Activated T-helper 1 cell treated with anti-CD3 and anti-CD28 coated beads, Interleukin-12 subunit alpha, Interleukin-12 subunit beta, Interleukin-2, Interleukin-4 antibody, amounts not matched to agents 30 ng/mL and 10 ng/mL and 1 ng/mL, durations not matched to agents 14 hours and 24 hours and 36 hours (primary cell): ENCODE measurements at regions of chr6 and their contacts with region 1.

Region 1: DNA sequence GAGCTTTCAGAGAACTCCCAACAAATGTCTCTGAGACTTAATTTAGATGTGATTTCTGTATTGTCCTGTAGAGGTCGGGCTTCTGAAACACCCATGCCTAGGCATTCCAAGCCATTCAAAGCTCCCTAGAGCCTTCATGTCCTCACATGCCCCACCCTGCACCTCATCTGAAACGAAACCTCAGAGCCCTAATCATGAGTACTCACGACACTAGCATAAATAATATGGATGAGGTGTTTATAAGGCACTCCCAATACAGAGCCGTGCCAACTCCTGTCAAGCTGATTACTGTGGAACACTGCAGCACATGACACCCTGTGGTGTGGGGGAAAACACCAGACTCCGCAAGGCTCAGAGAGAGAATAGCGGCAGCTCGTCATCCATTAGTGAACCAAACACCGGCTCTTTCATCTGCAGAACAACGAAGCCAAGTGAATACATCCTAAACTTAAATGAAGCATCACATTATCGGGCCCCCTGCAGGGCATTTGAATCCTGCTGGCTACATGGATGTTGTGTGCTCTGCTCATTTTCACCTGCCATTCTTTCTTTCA is 83.8 kb downstream of the FNDC1 start:
- DNase-seq: no peak
- H3K4me3 Mint-ChIP-seq: no peak overlapping the region
- H3K27ac Mint-ChIP-seq: no peak overlapping the region
- H3K4me1 Mint-ChIP-seq: no peaks in the 10 kb centered on the region
- H3K27me3 Mint-ChIP-seq: peaks cover 2% of the 10 kb centered on the region

Region 2: DNA sequence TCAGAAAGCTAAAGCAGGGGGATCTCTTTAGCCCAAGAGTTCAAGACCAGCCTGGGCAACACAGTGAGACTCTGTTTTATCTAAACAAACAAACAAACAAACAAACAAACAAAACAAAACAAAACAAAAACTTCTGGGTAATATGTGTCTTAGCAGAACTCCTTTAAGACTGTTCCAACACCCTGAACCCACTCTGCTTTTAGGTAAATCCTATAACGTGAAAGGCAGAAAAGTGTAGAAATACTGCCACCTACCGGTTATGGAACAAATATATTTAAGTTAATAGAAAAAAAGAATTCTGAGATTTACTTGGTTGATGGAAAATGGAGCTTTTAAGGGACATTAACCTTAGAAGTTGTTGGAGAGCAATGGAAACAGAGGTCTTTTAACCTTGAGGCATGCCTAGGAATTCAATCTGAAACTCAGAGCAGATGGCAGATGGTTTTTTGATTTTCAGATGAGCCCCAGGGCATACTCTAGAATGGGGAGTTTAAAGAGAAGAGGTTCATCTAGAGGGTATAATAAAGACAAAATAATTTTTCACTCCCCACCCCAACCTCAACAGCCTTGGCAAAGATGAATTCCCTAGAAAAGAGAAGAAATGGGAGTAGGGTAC is 401.6 kb after region 1 on chr6:
- intact Hi-C with region 1: loop called (anchors 2 kb)
- DNase-seq: no peak
- H3K4me3 Mint-ChIP-seq: no peak overlapping the region
- H3K27ac Mint-ChIP-seq: no peak overlapping the region
- H3K4me1 Mint-ChIP-seq: no peaks in the 10 kb centered on the region
- H3K27me3 Mint-ChIP-seq: no peaks in the 10 kb centered on the region